ENCODE measurements at regions of chr4 and their contacts with region 1.

Region 1: DNA sequence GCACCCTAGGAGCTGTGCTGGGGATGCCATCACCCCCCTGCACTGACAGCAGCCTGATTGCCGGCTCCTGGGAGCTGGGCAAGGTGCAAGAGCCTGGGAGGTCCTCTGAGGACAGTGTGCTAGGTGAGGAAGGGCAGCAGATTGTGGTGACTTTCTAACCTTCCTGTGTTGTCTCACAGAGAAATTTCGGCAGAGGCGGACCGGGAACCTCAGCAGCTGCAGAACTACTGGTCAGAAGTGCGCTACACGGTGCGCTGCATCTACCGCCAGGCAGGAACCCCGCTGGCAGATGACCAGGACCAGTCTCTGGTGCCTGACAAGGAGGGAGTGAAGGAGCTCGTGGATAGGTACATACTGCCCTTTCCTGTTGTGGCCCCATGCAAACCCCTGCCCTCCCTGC is 89.8 kb downstream of the FAM193A start:
- DNase-seq: no peak
- H3K4me3 ChIP-seq: no peak overlapping the region
- H3K4me3 Mint-ChIP-seq: no peak overlapping the region
- H3K27ac Mint-ChIP-seq: no peak overlapping the region
- H3K4me1 ChIP-seq: no peaks in the 10 kb centered on the region
- H3K4me1 Mint-ChIP-seq: no peaks in the 10 kb centered on the region
- H3K27me3 ChIP-seq: no peaks in the 10 kb centered on the region
- H3K27me3 Mint-ChIP-seq: no peaks in the 10 kb centered on the region
- CTCF ChIP-seq: no peak

Region 2: DNA sequence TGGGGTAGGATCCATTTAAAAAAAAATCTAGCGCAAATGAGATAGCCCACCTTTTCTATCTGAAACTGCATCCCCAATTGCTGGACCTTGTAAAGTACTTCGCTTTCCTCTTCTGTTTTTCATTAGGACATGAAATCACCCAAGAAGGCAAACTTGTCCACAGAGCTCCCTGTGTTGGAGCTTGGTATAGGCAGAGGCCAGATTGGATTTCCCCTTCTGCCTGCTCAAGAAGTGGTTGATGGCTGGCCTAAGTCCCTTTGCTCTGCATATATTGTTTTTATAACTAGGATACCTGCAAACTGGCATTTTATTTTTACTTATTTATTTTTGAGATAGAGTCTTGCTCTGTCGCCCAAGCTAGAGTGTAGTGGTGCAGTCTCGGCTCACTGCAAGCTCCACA is 128.9 kb before region 1 on chr4:
- CTCF ChIA-PET with region 1: no interaction called
- POLR2A ChIA-PET with region 1: interaction called, 14 read pairs
- intact Hi-C with region 1: no loop called
- DNase-seq: no peak
- H3K4me3 ChIP-seq: no peak overlapping the region
- H3K4me3 Mint-ChIP-seq: no peak overlapping the region
- H3K27ac Mint-ChIP-seq: no peak overlapping the region
- H3K4me1 ChIP-seq: no peaks in the 10 kb centered on the region
- H3K4me1 Mint-ChIP-seq: no peaks in the 10 kb centered on the region
- H3K27me3 ChIP-seq: no peaks in the 10 kb centered on the region
- H3K27me3 Mint-ChIP-seq: no peaks in the 10 kb centered on the region
- CTCF ChIP-seq: no peak

Region 3: DNA sequence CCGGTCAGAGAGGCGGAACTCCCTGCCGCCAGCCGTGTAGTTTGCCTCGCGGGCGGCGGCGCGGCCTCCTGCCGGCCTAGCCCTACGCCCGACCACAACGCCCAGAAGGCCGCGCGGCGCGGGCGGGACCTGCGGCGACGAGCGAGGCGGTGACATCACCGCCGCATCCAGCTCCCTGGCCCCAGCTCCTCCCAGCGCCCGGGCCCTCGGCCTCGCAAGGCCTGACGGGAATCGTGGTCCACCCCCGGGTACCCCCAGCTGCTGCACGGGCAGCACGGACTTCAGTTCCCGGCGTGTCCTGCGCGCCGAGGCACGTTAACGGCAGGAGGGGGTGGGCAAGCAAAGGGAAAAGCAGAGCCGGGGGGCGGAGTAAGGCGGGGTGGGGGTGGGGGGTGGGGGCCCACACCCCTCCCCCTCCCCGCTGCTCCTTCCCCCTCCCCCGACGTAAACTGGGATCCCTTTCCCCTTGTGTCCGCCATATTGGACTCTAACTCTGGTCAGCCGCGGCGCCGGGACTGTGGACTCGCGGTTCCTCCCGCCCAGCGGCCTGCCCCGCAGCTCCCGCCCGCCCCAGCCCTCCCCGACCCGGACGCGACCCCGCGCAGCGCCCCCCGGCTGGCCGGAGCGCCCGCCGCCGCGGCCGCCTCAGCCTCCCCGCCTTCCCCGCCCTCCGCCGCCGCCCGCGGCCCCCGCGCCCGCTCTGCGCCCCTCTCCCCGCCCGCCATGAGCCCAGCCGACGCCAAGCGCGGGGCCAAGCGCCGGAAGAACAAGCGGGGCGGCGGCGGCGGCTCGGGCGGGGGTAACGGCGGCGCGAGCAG is 89.8 kb before region 1 on chr4 and contains the start of gene FAM193A:
- CTCF ChIA-PET with region 1: no interaction called
- POLR2A ChIA-PET with region 1: interaction called, 10 read pairs
- intact Hi-C with region 1: no loop called
- DNase-seq: peak; percentile 99
- H3K4me3 ChIP-seq: peak within 1 kb of the TSS; percentile 92
- H3K4me3 Mint-ChIP-seq: peak within 1 kb of the TSS; percentile 88
- H3K27ac Mint-ChIP-seq: peak within 1 kb of the TSS; percentile 88
- H3K4me1 ChIP-seq: no peaks in the 10 kb centered on the region
- H3K4me1 Mint-ChIP-seq: no peaks in the 10 kb centered on the region
- H3K27me3 ChIP-seq: no peaks in the 10 kb centered on the region
- H3K27me3 Mint-ChIP-seq: no peaks in the 10 kb centered on the region
- CTCF ChIP-seq: no peak
- total RNA-seq, gene FAM193A: 28.7 and 31.2 TPM in 2 replicates